Heart left ventricle (tissue), 16 donors: ENCODE measurements at regions of chr10 and their contacts with region 1.

Region 1: DNA sequence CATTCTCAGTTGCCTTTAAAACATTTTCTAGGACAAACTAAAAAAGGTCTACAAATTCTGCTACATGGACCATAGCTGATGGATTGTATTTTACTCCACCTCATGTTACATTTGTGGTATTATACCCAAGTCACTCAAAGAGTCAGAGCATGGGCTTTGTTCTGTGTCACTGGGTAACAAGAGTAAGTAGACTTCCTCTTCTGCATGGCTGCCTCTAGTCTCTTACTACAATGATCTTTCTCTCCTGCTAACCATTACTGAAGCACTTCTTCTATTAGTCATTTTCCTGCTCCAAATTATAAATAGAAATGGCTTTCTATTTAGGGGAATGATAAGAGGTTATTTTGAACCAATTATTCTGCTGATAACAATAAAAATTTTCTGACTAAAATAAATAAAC is 727.4 kb upstream of the NRP1 start:
- DNase-seq: no peak
- ATAC-seq: peak in 1 of 4 donors; percentile 24
- H3K4me3 ChIP-seq: no peak overlapping the region
- H3K27ac ChIP-seq: no peak overlapping the region
- H3K4me1 ChIP-seq: peaks cover 0 to 7% (median 0%) of the 10 kb centered on the region in 12 donors
- H3K27me3 ChIP-seq: no peaks in the 10 kb centered on the region
- CTCF ChIP-seq: no peak
- POLR2A ChIP-seq: no peak

Region 2: GRCh38 chr10:33880291-33880690 is 181.6 kb before region 1 on chr10:
- intact Hi-C with region 1: loop called in 1 of 10 experiments (anchors 10 kb)
- DNase-seq: no peak
- ATAC-seq: no peak
- H3K4me3 ChIP-seq: no peak overlapping the region
- H3K27ac ChIP-seq: no peak overlapping the region
- H3K4me1 ChIP-seq: no peaks in the 10 kb centered on the region
- H3K27me3 ChIP-seq: no peaks in the 10 kb centered on the region
- CTCF ChIP-seq: no peak
- POLR2A ChIP-seq: no peak

Region 3: DNA sequence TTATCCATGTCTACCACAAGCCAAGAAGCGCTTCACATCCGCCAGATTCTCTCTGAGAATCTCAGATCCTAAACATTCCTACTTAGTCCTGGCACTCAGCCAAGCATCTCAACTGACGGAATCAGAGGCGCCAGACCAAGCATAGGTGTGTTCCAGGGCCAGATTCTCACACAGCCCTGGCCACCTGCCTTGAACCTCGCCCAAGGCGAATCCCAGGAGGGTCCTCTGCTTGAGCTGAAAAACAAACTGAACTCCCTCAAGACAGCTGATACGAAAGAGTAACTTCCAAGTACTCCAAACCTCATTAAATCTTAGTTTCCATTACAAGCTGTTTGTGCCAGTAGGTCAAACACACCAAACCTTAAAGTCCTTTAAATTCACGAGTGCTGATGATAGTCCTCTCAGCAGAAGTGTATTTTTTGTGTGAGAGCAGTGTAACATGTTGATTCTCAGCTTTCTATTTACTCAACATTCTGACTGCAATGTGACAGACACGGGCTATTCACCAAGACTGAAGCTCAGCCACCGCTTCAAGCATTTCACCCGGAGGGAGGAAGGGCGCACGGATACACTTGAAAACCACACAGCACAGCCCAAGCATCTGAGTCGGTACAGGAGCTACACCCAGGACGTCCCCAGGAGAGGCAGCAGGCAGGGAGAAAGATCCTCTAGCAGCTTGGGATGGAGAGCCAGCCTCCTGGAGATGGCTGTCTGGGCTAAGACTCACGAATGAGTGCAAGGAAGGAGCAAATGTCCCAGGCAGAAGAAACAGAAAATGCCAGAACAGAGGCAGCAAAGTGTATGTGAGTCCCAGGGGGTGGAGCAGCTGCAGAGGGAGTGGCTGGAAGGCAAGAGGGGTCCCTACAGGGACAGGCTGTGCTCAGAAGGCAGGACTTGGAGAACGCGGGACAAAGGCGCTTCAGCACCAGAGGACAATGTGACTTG is 747.2 kb after region 1 on chr10:
- intact Hi-C with region 1: no loop called
- DNase-seq: peak in 3 of 5 donors; percentile 39 to 69 (median 42)
- ATAC-seq: peak; percentile 29 to 58 (median 32)
- H3K4me3 ChIP-seq: peak overlapping the region in 8 of 12 donors; percentile 11 to 43 (median 16)
- H3K27ac ChIP-seq: peak overlapping the region in 4 of 12 donors; percentile 20 to 65 (median 51)
- H3K4me1 ChIP-seq: peaks cover 0 to 46% (median 21%) of the 10 kb centered on the region in 12 donors
- H3K27me3 ChIP-seq: peaks cover 0 to 10% (median 0%) of the 10 kb centered on the region in 9 donors
- CTCF ChIP-seq: no peak
- POLR2A ChIP-seq: no peak